CD14-positive monocyte (primary cell): ENCODE measurements at regions of chr12 and their contacts with region 1.

Region 1: DNA sequence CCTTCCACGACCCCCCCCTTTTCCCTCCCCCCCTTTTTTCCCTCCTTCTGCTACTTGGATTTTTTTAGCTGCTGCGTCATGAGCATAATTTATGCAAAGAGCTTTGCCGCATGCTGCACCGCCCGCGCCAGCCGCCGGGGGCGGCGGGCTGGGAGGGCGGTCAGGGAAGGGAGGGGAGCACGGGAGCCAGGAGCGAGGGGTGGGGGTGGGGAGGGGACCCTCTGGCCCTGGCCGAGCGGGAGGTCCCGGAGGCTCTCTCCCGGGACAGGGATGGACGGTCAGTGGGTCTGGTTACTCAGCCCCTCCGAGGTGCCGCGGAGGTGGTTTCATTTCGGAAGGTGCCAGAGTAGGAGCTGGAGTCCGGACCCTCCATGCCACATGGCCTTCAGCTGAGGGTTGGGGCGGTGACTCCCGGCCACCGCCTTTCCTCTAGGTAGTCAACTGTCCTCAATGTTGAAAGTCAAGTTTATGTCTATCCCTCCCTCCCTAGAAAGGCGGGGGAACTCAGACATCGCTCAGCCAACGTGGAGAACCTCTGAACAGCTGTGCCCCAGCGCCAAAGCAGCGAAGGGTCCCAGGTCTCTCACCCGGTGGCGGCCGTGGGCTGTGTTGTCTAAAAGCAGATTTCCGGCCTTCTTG is at the start of gene POU6F1:
- DNase-seq: peak; percentile 68 to 78 (median 69)
- H3K4me3 ChIP-seq: peak within 1 kb of the TSS; percentile 88 to 95 (median 94)
- H3K4me3 Mint-ChIP-seq: peak within 1 kb of the TSS; percentile 93 to 95
- H3K27ac ChIP-seq: peak within 1 kb of the TSS; percentile 14 to 90
- H3K27ac Mint-ChIP-seq: peak within 1 kb of the TSS; percentile 82 to 89 (median 85)
- H3K4me1 ChIP-seq: peaks cover 13 to 17% of the 10 kb centered on the region in 2 donors
- H3K4me1 Mint-ChIP-seq: peaks cover 11% of the 10 kb centered on the region
- H3K27me3 ChIP-seq: peaks cover 0 to 7% of the 10 kb centered on the region in 2 donors
- H3K27me3 Mint-ChIP-seq: peaks cover 0 to 2% (median 0%) of the 10 kb centered on the region in 3 donors
- CTCF ChIP-seq: peak; percentile 70
- polyA plus RNA-seq, gene POU6F1: 0.65 to 5.2 TPM in 2 of 3 donors, not detected in the other

Region 2: DNA sequence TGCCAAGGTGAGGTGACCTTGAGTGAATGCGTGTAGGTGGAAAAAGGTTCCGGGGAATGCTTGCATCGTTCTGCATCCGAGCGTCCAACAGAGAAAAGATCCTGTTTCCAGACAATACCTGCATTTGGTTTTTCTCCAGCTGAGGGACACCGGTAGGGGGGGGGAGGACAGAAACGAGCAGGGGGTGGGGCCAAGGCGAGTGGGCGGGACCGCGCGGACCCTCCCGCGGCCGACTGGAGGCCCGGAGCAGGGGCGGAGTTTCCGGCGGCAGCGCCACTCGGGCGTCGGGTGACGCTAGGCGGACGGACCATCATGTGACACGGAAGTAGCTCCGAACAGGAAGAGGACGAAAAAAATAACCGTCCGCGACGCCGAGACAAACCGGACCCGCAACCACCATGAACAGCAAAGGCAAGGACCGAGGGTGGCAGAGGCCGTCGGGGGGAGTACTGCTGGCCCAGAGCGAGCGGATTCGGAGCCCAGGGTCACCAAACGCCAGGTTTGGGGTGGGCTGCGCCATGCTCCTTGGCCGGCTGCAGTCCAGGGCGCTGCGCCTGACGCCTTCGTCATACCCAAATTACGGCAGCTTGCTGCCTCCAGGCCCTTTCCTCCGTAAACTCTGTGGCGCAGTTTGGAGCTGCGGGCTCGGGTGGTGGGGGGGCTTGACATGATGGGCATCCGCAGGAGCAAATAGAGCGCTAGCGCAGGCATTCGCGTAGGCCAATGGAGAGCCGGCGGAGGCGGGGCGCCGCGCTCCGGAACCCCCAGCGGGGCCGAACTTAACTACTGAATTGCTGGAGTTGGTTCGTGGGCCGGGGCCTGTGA is 20.6 kb after region 1 on chr12 and contains the start of gene DAZAP2:
- intact Hi-C with region 1: loop called in 1 of 2 experiments (anchors 2 kb)
- DNase-seq: peak; percentile 95 to 97 (median 96)
- H3K4me3 ChIP-seq: peak within 1 kb of the TSS; percentile 65 to 94 (median 93)
- H3K4me3 Mint-ChIP-seq: peak within 1 kb of the TSS; percentile 92 to 97
- H3K27ac ChIP-seq: peak within 1 kb of the TSS; percentile 99 to 100
- H3K27ac Mint-ChIP-seq: peak within 1 kb of the TSS; percentile 97 to 100 (median 100)
- H3K4me1 ChIP-seq: peaks cover 48 to 51% of the 10 kb centered on the region in 2 donors
- H3K4me1 Mint-ChIP-seq: peaks cover 43% of the 10 kb centered on the region
- H3K27me3 ChIP-seq: no peaks in the 10 kb centered on the region
- H3K27me3 Mint-ChIP-seq: peaks cover 0 to 2% (median 2%) of the 10 kb centered on the region in 3 donors
- CTCF ChIP-seq: peak; percentile 20
- polyA plus RNA-seq, gene DAZAP2: 975 to 2,004 (median 1,697) TPM

Region 3: GRCh38 chr12:51254592-51254991 is 36.5 kb after region 1 on chr12:
- intact Hi-C with region 1: loop called in 1 of 2 experiments (anchors 5 kb)
- DNase-seq: no peak
- H3K4me3 ChIP-seq: no peak overlapping the region
- H3K4me3 Mint-ChIP-seq: no peak overlapping the region
- H3K27ac ChIP-seq: no peak overlapping the region
- H3K27ac Mint-ChIP-seq: no peak overlapping the region
- H3K4me1 ChIP-seq: peaks cover 20% of the 10 kb centered on the region in 2 donors
- H3K4me1 Mint-ChIP-seq: peaks cover 20% of the 10 kb centered on the region
- H3K27me3 ChIP-seq: no peaks in the 10 kb centered on the region
- H3K27me3 Mint-ChIP-seq: peaks cover 0 to 4% (median 1%) of the 10 kb centered on the region in 3 donors
- CTCF ChIP-seq: no peak

Region 4: DNA sequence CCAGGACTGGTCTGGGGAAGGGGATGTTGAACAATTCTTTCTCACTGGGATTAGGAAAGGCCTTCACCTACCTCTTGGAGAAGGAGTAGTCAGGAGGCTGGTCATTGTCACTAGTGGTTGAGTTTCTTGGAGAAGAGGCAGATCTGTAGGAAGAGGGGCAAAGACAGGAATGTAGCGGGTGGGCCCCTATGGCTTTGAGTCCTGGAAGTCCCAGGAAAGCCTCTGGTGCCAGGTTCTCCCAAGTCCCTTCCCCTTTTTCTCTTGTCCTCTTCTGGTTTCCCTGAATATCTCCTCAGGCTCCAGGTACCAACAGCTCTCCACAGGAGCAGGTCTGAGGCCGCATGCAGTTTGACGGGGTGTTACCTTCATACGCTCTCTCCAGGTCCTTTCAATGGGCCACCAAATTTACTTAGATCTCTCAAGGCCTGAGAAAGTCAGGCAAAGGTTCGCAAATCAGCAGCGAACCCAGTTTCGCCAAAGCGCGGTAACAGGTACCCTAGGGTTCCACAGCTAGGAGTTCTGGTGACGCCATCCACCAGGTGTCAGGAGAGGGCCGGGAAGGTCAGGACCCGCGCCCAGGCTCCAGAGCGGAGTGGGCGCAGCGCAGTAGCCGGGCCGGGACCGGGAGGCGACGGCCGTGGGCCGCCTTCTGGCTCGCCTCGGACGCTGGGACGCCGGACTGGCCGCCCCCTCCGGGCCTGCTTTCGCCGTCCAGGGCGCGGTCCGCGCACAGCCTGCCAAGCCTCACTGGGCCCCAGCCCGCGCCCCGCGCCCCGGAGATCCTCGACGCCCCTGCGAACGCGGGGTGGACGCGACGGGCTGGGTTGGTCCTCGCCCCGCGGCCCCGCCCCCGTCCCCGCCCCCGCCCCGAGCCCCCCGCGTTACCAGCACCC is 51.3 kb after region 1 on chr12:
- intact Hi-C with region 1: loop called in 1 of 2 experiments (anchors 10 kb)
- DNase-seq: peak in 1 of 3 donors; percentile 22
- H3K4me3 ChIP-seq: peak overlapping the region; percentile 16 to 90 (median 75)
- H3K4me3 Mint-ChIP-seq: peak overlapping the region; percentile 87 to 93
- H3K27ac ChIP-seq: no peak overlapping the region
- H3K27ac Mint-ChIP-seq: peak overlapping the region in 1 of 7 donors; percentile 68
- H3K4me1 ChIP-seq: peaks cover 16 to 21% of the 10 kb centered on the region in 2 donors
- H3K4me1 Mint-ChIP-seq: peaks cover 18% of the 10 kb centered on the region
- H3K27me3 ChIP-seq: peaks cover 20 to 35% of the 10 kb centered on the region in 2 donors
- H3K27me3 Mint-ChIP-seq: peaks cover 35 to 51% (median 41%) of the 10 kb centered on the region in 3 donors
- CTCF ChIP-seq: no peak

Region 5: GRCh38 chr12:51549637-51550036 is 331.6 kb after region 1 on chr12:
- intact Hi-C with region 1: no loop called
- DNase-seq: no peak
- H3K4me3 ChIP-seq: no peak overlapping the region
- H3K4me3 Mint-ChIP-seq: no peak overlapping the region
- H3K27ac ChIP-seq: no peak overlapping the region
- H3K27ac Mint-ChIP-seq: no peak overlapping the region
- H3K4me1 ChIP-seq: no peaks in the 10 kb centered on the region
- H3K4me1 Mint-ChIP-seq: no peaks in the 10 kb centered on the region
- H3K27me3 ChIP-seq: peaks cover 0 to 3% of the 10 kb centered on the region in 2 donors
- H3K27me3 Mint-ChIP-seq: peaks cover 4 to 20% (median 9%) of the 10 kb centered on the region in 3 donors
- CTCF ChIP-seq: no peak